HCT116 (cell line): ENCODE measurements at regions of chr13 and their contacts with region 1.

Region 1: GRCh38 chr13:27339299-27339698 is 68.7 kb downstream of the RASL11A start:
- DNase-seq: peak; percentile 78
- ATAC-seq: peak; percentile 96
- H3K4me3 ChIP-seq: peak overlapping the region; percentile 12 to 27; a peak in 2 of 4 replicates
- H3K27ac ChIP-seq: no peak overlapping the region
- H3K4me1 ChIP-seq: 0 out of 4 replicates have a peak, but pooled peaks cover 0 to 13% of the 10 kb centered on the region in 2 experiments
- H3K27me3 ChIP-seq: no peaks in the 10 kb centered on the region
- CTCF ChIP-seq: peak; percentile 45 to 90 (median 63); a peak in 5 of 6 replicates
- POLR2A ChIP-seq: no peak
- RAD21 ChIP-seq: peak; percentile 46

Region 2: GRCh38 chr13:26965952-26966700 is 373.2 kb before region 1 on chr13:
- CTCF ChIA-PET with region 1: no interaction called
- POLR2A ChIA-PET with region 1: no interaction called
- RAD21 ChIA-PET with region 1: no interaction called
- intact Hi-C with region 1: no loop called
- DNase-seq: no peak
- ATAC-seq: no peak
- H3K4me3 ChIP-seq: no peak overlapping the region
- H3K27ac ChIP-seq: no peak overlapping the region
- H3K4me1 ChIP-seq: no peaks in the 10 kb centered on the region
- H3K27me3 ChIP-seq: no peaks in the 10 kb centered on the region
- CTCF ChIP-seq: no peak
- POLR2A ChIP-seq: no peak
- RAD21 ChIP-seq: no peak

Region 3: GRCh38 chr13:27309967-27310598 is 29.2 kb before region 1 on chr13:
- CTCF ChIA-PET with region 1: interaction called, 14 read pairs
- POLR2A ChIA-PET with region 1: interaction called, 4 read pairs
- RAD21 ChIA-PET with region 1: no interaction called
- intact Hi-C with region 1: no loop called
- DNase-seq: peak; percentile 56
- ATAC-seq: peak; percentile 76
- H3K4me3 ChIP-seq: peak overlapping the region in 1 of 2 experiments; percentile 25; a peak in 2 of 4 replicates
- H3K27ac ChIP-seq: peak overlapping the region; percentile 31; the same call in 1 of the 2 replicates
- H3K4me1 ChIP-seq: peaks cover 20 to 36% of the 10 kb centered on the region in 2 experiments
- H3K27me3 ChIP-seq: no peaks in the 10 kb centered on the region
- CTCF ChIP-seq: no peak
- POLR2A ChIP-seq: no peak
- RAD21 ChIP-seq: no peak

Region 4: GRCh38 chr13:27353166-27353583 is 13.9 kb after region 1 on chr13:
- CTCF ChIA-PET with region 1: interaction called, 18 read pairs
- POLR2A ChIA-PET with region 1: interaction called, 3 read pairs
- RAD21 ChIA-PET with region 1: no interaction called
- intact Hi-C with region 1: no loop called
- DNase-seq: no peak
- ATAC-seq: no peak
- H3K4me3 ChIP-seq: no peak overlapping the region
- H3K27ac ChIP-seq: no peak overlapping the region
- H3K4me1 ChIP-seq: peaks cover 0 to 4% of the 10 kb centered on the region in 2 experiments; a peak in 2 of 4 replicates
- H3K27me3 ChIP-seq: no peaks in the 10 kb centered on the region
- CTCF ChIP-seq: no peak
- POLR2A ChIP-seq: no peak
- RAD21 ChIP-seq: no peak